Naive thymus-derived CD4-positive, alpha-beta T cell (primary cell): ENCODE measurements at regions of chr4 and their contacts with region 1.

Region 1: DNA sequence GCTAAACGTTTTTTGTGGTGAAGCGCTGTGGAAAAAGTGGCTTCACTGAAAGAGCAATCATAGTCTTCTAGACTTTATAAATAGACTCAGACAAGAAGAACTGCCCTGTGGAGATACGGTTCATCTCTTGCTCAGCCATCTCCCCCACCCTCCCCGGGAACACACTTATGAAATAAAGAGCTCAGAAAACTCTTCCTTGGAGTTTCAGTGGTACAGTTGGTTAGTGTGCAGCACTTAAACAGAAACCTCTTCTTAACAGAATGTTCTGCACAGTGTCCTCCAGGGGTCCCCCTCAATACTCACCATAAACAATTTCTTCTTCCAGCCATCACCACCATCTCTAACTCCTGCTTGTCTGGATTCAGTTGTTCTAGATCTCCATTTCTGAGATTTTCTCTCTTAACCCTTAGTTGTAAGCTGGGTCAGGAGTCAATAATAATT is 313.0 kb downstream of the ARHGAP10 start:
- DNase-seq: peak in 5 of 9 donors; percentile 20 to 58 (median 46)
- ATAC-seq: peak; percentile 71
- H3K4me3 ChIP-seq: no peak overlapping the region
- H3K4me3 Mint-ChIP-seq: no peak overlapping the region
- H3K27ac ChIP-seq: no peak overlapping the region
- H3K27ac Mint-ChIP-seq: peak overlapping the region in 2 of 9 donors; percentile 21 to 47
- H3K4me1 ChIP-seq: peaks cover 4% of the 10 kb centered on the region in 2 donors
- H3K4me1 Mint-ChIP-seq: peaks cover 7 to 26% (median 17%) of the 10 kb centered on the region in 7 donors
- H3K27me3 ChIP-seq: no peaks in the 10 kb centered on the region
- H3K27me3 Mint-ChIP-seq: no peaks in the 10 kb centered on the region

Region 2: DNA sequence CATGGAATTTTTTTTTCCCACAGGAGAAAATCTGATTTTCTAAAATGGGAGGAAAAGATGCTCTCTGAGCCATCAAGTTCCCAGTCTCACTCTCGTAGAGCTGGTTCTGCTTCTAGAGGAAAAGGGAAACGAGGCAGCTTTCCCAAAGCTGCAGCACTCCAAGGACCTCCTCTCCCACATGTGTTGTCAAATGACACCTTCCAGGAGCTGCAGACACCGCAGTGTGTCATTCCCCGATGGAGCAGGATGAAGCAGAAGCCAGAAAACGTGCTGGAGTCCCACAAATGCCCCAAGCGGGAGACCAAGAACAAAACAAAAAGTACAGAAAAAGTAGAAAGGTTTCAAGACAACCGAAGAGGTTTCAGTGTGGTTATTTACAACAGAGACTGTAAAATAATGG is 35.0 kb after region 1 on chr4:
- CTCF ChIA-PET with region 1: no interaction called
- POLR2A ChIA-PET with region 1: no interaction called
- intact Hi-C with region 1: no loop called
- DNase-seq: no peak
- ATAC-seq: no peak
- H3K4me3 ChIP-seq: no peak overlapping the region
- H3K4me3 Mint-ChIP-seq: no peak overlapping the region
- H3K27ac ChIP-seq: no peak overlapping the region
- H3K27ac Mint-ChIP-seq: peak overlapping the region in 1 of 9 donors; percentile 18
- H3K4me1 ChIP-seq: no peaks in the 10 kb centered on the region
- H3K4me1 Mint-ChIP-seq: peaks cover 0 to 16% (median 5%) of the 10 kb centered on the region in 7 donors
- H3K27me3 ChIP-seq: no peaks in the 10 kb centered on the region
- H3K27me3 Mint-ChIP-seq: no peaks in the 10 kb centered on the region

Region 3: GRCh38 chr4:148273501-148273986 is 228.6 kb after region 1 on chr4:
- CTCF ChIA-PET with region 1: no interaction called
- POLR2A ChIA-PET with region 1: no interaction called
- intact Hi-C with region 1: no loop called
- DNase-seq: no peak
- ATAC-seq: no peak
- H3K4me3 ChIP-seq: no peak overlapping the region
- H3K4me3 Mint-ChIP-seq: peak overlapping the region in 1 of 10 donors; percentile 12
- H3K27ac ChIP-seq: no peak overlapping the region
- H3K27ac Mint-ChIP-seq: peak overlapping the region in 2 of 9 donors; percentile 27 to 55
- H3K4me1 ChIP-seq: no peaks in the 10 kb centered on the region
- H3K4me1 Mint-ChIP-seq: peaks cover 0 to 70% (median 57%) of the 10 kb centered on the region in 7 donors
- H3K27me3 ChIP-seq: no peaks in the 10 kb centered on the region
- H3K27me3 Mint-ChIP-seq: no peaks in the 10 kb centered on the region

Region 4: GRCh38 chr4:148770377-148770776 is 725.4 kb after region 1 on chr4:
- CTCF ChIA-PET with region 1: no interaction called
- POLR2A ChIA-PET with region 1: no interaction called
- intact Hi-C with region 1: loop called in 1 of 2 experiments (anchors 1 kb)
- DNase-seq: peak in 1 of 9 donors; percentile 1
- ATAC-seq: no peak
- H3K4me3 ChIP-seq: no peak overlapping the region
- H3K4me3 Mint-ChIP-seq: no peak overlapping the region
- H3K27ac ChIP-seq: no peak overlapping the region
- H3K27ac Mint-ChIP-seq: no peak overlapping the region
- H3K4me1 ChIP-seq: no peaks in the 10 kb centered on the region
- H3K4me1 Mint-ChIP-seq: no peaks in the 10 kb centered on the region
- H3K27me3 ChIP-seq: no peaks in the 10 kb centered on the region
- H3K27me3 Mint-ChIP-seq: no peaks in the 10 kb centered on the region